Activated naive CD4-positive, alpha-beta T cell treated with anti-CD3 and anti-CD28 coated beads for 36 hours (primary cell): ENCODE measurements at regions of chr5 and their contacts with region 1.

Region 1: GRCh38 chr5:133111299-133111698 is 59.5 kb downstream of the HSPA4 start:
- DNase-seq: peak; percentile 89
- H3K4me3 Mint-ChIP-seq: no peak overlapping the region
- H3K27ac Mint-ChIP-seq: no peak overlapping the region
- H3K4me1 Mint-ChIP-seq: peaks cover 21% of the 10 kb centered on the region
- H3K27me3 Mint-ChIP-seq: no peaks in the 10 kb centered on the region

Region 2: GRCh38 chr5:133017964-133018363 is 93.3 kb before region 1 on chr5:
- CTCF ChIA-PET with region 1: no interaction called
- intact Hi-C with region 1: no loop called
- DNase-seq: no peak
- H3K4me3 Mint-ChIP-seq: no peak overlapping the region
- H3K27ac Mint-ChIP-seq: no peak overlapping the region
- H3K4me1 Mint-ChIP-seq: no peaks in the 10 kb centered on the region
- H3K27me3 Mint-ChIP-seq: no peaks in the 10 kb centered on the region

Region 3: GRCh38 chr5:133247881-133248624 is 136.8 kb after region 1 on chr5:
- CTCF ChIA-PET with region 1: interaction called, 3 read pairs
- intact Hi-C with region 1: loop called (anchors 5 kb)
- DNase-seq: no peak
- H3K4me3 Mint-ChIP-seq: no peak overlapping the region
- H3K27ac Mint-ChIP-seq: no peak overlapping the region
- H3K4me1 Mint-ChIP-seq: peaks cover 9% of the 10 kb centered on the region
- H3K27me3 Mint-ChIP-seq: no peaks in the 10 kb centered on the region

Region 4: DNA sequence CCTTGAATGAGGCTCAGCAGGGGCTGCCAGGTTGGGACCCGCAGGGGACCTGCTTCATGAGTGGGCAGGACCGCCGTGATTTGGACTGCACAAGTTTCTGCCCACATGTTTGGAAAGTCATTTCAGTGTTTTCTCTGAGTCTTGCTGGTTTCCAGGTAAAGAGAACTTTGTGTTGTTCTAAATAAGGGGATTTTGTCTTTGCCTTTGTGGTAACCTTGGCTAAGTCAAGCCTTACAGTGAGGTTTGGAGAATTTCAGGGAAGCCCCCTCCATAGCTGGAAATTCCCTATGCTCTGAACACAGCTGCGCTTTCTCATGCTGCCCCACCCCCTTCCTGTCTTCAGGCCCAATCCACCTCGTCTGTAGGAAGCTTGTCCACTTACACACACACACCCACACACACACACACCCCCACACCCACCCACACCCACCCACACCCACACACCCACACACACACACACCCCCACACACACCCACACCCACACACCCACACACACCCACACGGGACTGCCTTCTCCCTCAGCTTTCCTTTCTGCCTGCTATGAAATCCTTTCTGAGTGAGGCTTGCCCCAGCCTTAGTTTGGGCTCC is 210.6 kb after region 1 on chr5:
- CTCF ChIA-PET with region 1: interaction called, 4 read pairs
- intact Hi-C with region 1: loop called (anchors 1 kb)
- DNase-seq: peak; percentile 90
- H3K4me3 Mint-ChIP-seq: no peak overlapping the region
- H3K27ac Mint-ChIP-seq: peak overlapping the region; percentile 68
- H3K4me1 Mint-ChIP-seq: peaks cover 16% of the 10 kb centered on the region
- H3K27me3 Mint-ChIP-seq: no peaks in the 10 kb centered on the region

Region 5: GRCh38 chr5:133364936-133365707 is 253.8 kb after region 1 on chr5:
- CTCF ChIA-PET with region 1: interaction called, 4 read pairs
- intact Hi-C with region 1: loop called (anchors 5 kb)
- DNase-seq: peak; percentile 31
- H3K4me3 Mint-ChIP-seq: no peak overlapping the region
- H3K27ac Mint-ChIP-seq: no peak overlapping the region
- H3K4me1 Mint-ChIP-seq: no peaks in the 10 kb centered on the region
- H3K27me3 Mint-ChIP-seq: peaks cover 4% of the 10 kb centered on the region

Region 6: GRCh38 chr5:133460172-133460758 is 349.0 kb after region 1 on chr5:
- CTCF ChIA-PET with region 1: interaction called, 10 read pairs
- intact Hi-C with region 1: loop called (anchors 1 kb)
- DNase-seq: peak; percentile 72
- H3K4me3 Mint-ChIP-seq: no peak overlapping the region
- H3K27ac Mint-ChIP-seq: no peak overlapping the region
- H3K4me1 Mint-ChIP-seq: peaks cover 2% of the 10 kb centered on the region
- H3K27me3 Mint-ChIP-seq: no peaks in the 10 kb centered on the region